HepG2 (cell line): ENCODE measurements at regions of chr21 and their contacts with region 1.

Region 1: DNA sequence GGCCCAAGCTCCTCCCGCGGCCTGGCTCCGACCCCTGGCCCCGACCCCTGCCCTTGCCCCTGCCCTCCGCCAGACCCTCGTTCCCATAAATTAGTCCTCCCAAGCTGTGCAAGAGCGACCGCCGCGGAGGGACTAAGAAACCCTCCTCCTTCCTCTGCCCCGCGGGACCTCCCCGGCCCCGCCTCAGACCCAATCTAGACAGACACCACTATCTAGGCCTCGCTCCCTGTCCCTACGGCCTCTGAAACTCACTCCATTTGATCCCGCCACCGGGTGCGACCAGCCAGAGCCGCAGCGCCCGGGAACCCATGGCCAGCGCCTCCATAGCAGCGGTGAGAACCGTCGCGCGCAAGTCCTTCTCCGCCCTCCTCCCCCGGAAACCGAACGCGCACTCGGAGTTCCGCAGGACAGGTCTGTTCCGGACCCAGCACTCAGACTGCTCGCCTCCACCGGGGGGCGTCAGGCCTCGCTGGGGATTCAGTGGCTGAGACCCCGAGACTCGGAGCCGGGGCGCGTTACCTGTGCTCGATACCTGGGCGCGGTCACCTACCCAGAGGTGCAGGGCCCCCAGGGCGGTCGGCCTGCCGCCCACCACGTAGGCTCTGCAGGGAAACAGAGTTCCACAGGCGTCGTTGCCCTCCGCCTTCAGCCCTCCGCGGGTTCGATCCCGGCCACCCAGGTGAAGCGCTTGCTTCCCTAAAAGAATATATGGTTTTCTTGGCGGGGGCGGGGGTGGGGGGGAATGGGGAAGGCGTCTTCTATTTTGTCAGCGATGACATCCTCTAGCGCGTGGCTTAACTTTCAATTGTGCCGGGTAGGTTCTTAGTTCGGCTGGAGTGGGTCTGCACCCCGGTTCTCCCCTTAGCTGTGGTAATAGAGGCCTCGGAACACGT is at the start of gene MRPL39:
- DNase-seq: peak; percentile 81
- ATAC-seq: peak; percentile 97
- H3K4me3 ChIP-seq: peak within 1 kb of the TSS; percentile 92 to 99 (median 98)
- H3K27ac ChIP-seq: peak within 1 kb of the TSS; percentile 88
- H3K4me1 ChIP-seq: peaks cover 20% of the 10 kb centered on the region
- H3K27me3 ChIP-seq: no peaks in the 10 kb centered on the region; a peak in 1 of 5 replicates
- CTCF ChIP-seq: peak; percentile 93
- EP300 ChIP-seq: peak in 1 of 2 experiments; percentile 15; a peak in 2 of 4 replicates
- POLR2A ChIP-seq: peak; percentile 88 to 95
- RAD21 ChIP-seq: peak; percentile 64
- total RNA-seq, gene MRPL39: 91.2 and 141 TPM in 2 replicates

Region 2: GRCh38 chr21:25639551-25640201 is 32.3 kb after region 1 on chr21:
- CTCF ChIA-PET with region 1: interaction called, 4 read pairs
- POLR2A ChIA-PET with region 1: no interaction called
- in situ Hi-C with region 1: no loop called
- intact Hi-C with region 1: loop called (anchors 1 kb)
- DNase-seq: no peak
- ATAC-seq: peak; percentile 94
- H3K4me3 ChIP-seq: peak overlapping the region; percentile 50 to 71 (median 54); a peak in 5 of 6 replicates
- H3K27ac ChIP-seq: no peak overlapping the region
- H3K4me1 ChIP-seq: peaks cover 8% of the 10 kb centered on the region; the same call in 1 of the 2 replicates
- H3K27me3 ChIP-seq: peaks cover 0 to 33% of the 10 kb centered on the region in 2 experiments; a peak in 2 of 5 replicates
- CTCF ChIP-seq: peak; percentile 45
- EP300 ChIP-seq: no peak
- POLR2A ChIP-seq: no peak
- RAD21 ChIP-seq: no peak

Region 3: GRCh38 chr21:25708467-25709065 is 101.2 kb after region 1 on chr21:
- CTCF ChIA-PET with region 1: interaction called, 41 read pairs
- POLR2A ChIA-PET with region 1: no interaction called
- in situ Hi-C with region 1: loop called (anchors 5 kb)
- intact Hi-C with region 1: loop called (anchors 1 kb)
- DNase-seq: peak; percentile 18
- ATAC-seq: no peak
- H3K4me3 ChIP-seq: no peak overlapping the region
- H3K27ac ChIP-seq: no peak overlapping the region
- H3K4me1 ChIP-seq: no peaks in the 10 kb centered on the region
- H3K27me3 ChIP-seq: no peaks in the 10 kb centered on the region
- CTCF ChIP-seq: peak; percentile 59
- EP300 ChIP-seq: no peak
- POLR2A ChIP-seq: no peak
- RAD21 ChIP-seq: no peak

Region 4: DNA sequence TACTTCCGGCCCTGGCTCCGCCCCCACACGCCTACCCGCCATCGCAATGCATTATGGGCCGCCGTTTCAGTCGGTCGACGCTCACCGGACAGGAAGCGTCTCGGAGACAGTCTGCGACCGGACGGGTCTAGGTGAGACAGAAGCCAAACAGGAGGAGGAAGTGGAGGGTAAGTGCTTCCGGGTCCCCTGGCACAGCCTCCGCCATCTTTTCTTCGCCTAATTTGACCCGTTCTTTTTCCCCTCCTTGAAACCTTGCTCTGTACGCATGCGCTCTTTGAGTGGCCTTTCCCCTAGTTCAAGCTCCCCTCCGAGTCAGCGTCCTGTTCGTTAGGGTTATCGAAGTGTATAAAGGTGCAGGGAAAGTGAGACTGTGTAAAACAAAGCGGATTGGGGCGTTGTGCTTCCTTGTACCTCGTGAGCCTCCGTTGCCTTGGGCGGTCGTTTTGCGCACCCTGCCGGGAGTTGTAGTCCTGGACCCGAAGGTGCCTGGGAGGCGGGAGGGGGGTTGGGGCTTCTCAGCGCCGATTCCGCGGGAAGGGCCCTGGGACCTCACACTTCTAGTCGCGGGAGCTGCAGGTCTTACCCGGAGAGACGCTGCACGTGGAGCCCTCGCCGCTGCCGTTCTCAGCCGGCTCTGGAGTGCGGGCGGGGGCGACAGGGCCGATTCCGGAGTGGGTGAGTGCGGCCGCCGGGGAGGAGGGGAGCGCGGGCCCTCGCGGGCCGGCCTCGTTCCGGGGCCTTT is 127.7 kb after region 1 on chr21 and contains the starts of genes ATP5PF and GABPA:
- CTCF ChIA-PET with region 1: no interaction called
- POLR2A ChIA-PET with region 1: interaction called, 9 read pairs
- in situ Hi-C with region 1: loop called (anchors 5 kb)
- intact Hi-C with region 1: loop called (anchors 1 kb)
- DNase-seq: peak; percentile 97
- ATAC-seq: peak; percentile 93
- H3K4me3 ChIP-seq: peak within 1 kb of the TSS; percentile 72 to 100 (median 96)
- H3K27ac ChIP-seq: peak within 1 kb of the TSS; percentile 100
- H3K4me1 ChIP-seq: peaks cover 32% of the 10 kb centered on the region
- H3K27me3 ChIP-seq: no peaks in the 10 kb centered on the region; a peak in 1 of 5 replicates
- CTCF ChIP-seq: peak; percentile 26
- EP300 ChIP-seq: no peak; a peak in 1 of 4 replicates
- POLR2A ChIP-seq: peak; percentile 50 to 73; a peak in 3 of 4 replicates
- RAD21 ChIP-seq: no peak; the same call in 1 of the 2 replicates
- total RNA-seq, gene ATP5PF: 131 and 196 TPM in 2 replicates
- total RNA-seq, gene GABPA: 13.2 and 19.7 TPM in 2 replicates

Region 5: GRCh38 chr21:25801217-25802014 is 194.0 kb after region 1 on chr21:
- CTCF ChIA-PET with region 1: interaction called, 36 read pairs
- POLR2A ChIA-PET with region 1: no interaction called
- in situ Hi-C with region 1: no loop called
- intact Hi-C with region 1: loop called (anchors 1 kb)
- DNase-seq: peak; percentile 86
- ATAC-seq: peak; percentile 100
- H3K4me3 ChIP-seq: peak overlapping the region in 1 of 3 experiments; percentile 40; a peak in 1 of 6 replicates
- H3K27ac ChIP-seq: no peak overlapping the region
- H3K4me1 ChIP-seq: no peaks in the 10 kb centered on the region
- H3K27me3 ChIP-seq: no peaks in the 10 kb centered on the region
- CTCF ChIP-seq: peak; percentile 97
- EP300 ChIP-seq: no peak
- POLR2A ChIP-seq: no peak
- RAD21 ChIP-seq: no peak; the same call in 1 of the 2 replicates

Region 6: DNA sequence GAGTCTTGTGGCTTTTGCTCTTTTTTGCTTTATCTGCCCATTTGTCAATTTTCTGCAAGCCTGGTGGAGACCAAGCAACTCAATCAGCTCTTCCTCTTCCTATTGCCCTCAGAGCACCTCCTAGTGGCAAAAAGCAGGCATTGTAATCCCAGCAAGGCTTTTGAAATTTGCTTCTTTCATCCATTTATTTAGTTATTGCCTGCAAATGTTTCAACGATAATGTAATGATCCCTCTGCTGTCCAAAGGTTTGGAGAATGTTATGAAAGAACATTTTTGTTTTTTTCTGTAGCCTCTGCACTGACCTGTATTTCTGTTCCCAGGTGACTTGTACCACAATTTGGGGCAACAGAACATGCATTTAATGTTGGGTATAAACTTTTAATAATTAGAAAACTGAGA is 255.2 kb after region 1 on chr21:
- CTCF ChIA-PET with region 1: interaction called, 9 read pairs
- POLR2A ChIA-PET with region 1: no interaction called
- in situ Hi-C with region 1: no loop called
- intact Hi-C with region 1: loop called (anchors 1 kb)
- DNase-seq: peak; percentile 12
- ATAC-seq: no peak
- H3K4me3 ChIP-seq: no peak overlapping the region
- H3K27ac ChIP-seq: no peak overlapping the region
- H3K4me1 ChIP-seq: no peaks in the 10 kb centered on the region
- H3K27me3 ChIP-seq: no peaks in the 10 kb centered on the region
- CTCF ChIP-seq: peak; percentile 44
- EP300 ChIP-seq: no peak
- POLR2A ChIP-seq: no peak
- RAD21 ChIP-seq: no peak

Region 7: GRCh38 chr21:26715878-26716506 is 1108.6 kb after region 1 on chr21:
- CTCF ChIA-PET with region 1: interaction called, 7 read pairs
- POLR2A ChIA-PET with region 1: no interaction called
- in situ Hi-C with region 1: loop called (anchors 10 kb)
- intact Hi-C with region 1: no loop called
- DNase-seq: peak; percentile 6
- ATAC-seq: peak; percentile 88
- H3K4me3 ChIP-seq: no peak overlapping the region
- H3K27ac ChIP-seq: no peak overlapping the region
- H3K4me1 ChIP-seq: no peaks in the 10 kb centered on the region
- H3K27me3 ChIP-seq: no peaks in the 10 kb centered on the region
- CTCF ChIP-seq: peak; percentile 54
- EP300 ChIP-seq: no peak
- POLR2A ChIP-seq: no peak
- RAD21 ChIP-seq: no peak